CD4-positive, alpha-beta T cell (primary cell): ENCODE measurements at regions of chr1 and their contacts with region 1.

Region 1: GRCh38 chr1:111227851-111228747 is 586 bp downstream of the CHI3L2 start:
- DNase-seq: no peak
- ATAC-seq: no peak
- H3K4me3 ChIP-seq: no peak overlapping the region
- H3K4me3 Mint-ChIP-seq: peak overlapping the region; percentile 73
- H3K27ac ChIP-seq: peak overlapping the region; percentile 62 to 73
- H3K27ac Mint-ChIP-seq: peak overlapping the region; percentile 92
- H3K4me1 ChIP-seq: peaks cover 70% of the 10 kb centered on the region
- H3K4me1 Mint-ChIP-seq: peaks cover 90% of the 10 kb centered on the region
- H3K27me3 ChIP-seq: no peaks in the 10 kb centered on the region
- H3K27me3 Mint-ChIP-seq: no peaks in the 10 kb centered on the region
- CTCF ChIP-seq: no peak

Region 2: DNA sequence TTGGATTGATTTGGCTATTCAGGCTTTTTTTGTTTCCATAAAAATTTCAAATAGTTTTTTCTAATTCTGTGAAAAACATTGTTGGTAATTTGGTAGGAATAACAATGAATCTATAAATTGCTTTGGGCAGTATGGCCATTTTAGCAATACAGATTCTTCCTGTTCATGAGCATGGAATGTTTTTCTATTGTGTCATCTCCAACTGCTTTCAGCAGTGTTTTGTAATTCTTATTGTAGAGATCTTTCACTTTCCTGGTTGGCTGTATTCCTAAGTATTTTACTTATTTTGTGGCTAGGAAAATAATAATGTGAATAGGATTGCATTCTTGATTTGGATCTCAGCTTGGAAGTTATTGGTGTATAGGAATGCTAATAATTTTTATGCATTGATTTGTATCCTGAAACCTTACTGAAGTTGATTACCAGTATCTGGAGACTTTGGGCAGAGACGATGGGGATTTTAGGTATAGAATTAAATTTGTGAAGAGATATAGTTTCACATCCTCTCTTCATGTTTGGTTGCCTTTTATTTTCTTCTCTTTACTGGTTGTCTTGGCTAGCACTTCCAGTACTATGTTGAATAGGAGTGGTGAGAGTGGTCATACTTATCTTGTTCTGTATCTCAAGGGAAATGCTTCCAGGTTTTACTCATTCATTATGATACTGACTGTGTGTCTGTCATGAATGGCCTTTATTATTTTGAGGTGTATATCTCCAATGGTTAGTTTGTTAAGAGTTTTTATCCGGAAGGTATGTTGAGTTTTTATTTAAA is 145.5 kb before region 1 on chr1:
- CTCF ChIA-PET with region 1: no interaction called
- POLR2A ChIA-PET with region 1: no interaction called
- intact Hi-C with region 1: no loop called
- DNase-seq: no peak
- ATAC-seq: no peak
- H3K4me3 ChIP-seq: no peak overlapping the region
- H3K4me3 Mint-ChIP-seq: no peak overlapping the region
- H3K27ac ChIP-seq: no peak overlapping the region
- H3K27ac Mint-ChIP-seq: no peak overlapping the region
- H3K4me1 ChIP-seq: no peaks in the 10 kb centered on the region
- H3K4me1 Mint-ChIP-seq: no peaks in the 10 kb centered on the region
- H3K27me3 ChIP-seq: peaks cover 0 to 8% of the 10 kb centered on the region in 2 experiments
- H3K27me3 Mint-ChIP-seq: peaks cover 34% of the 10 kb centered on the region
- CTCF ChIP-seq: no peak

Region 3: GRCh38 chr1:111214074-111214801 is 13.9 kb before region 1 on chr1:
- CTCF ChIA-PET with region 1: interaction called, 4 read pairs
- POLR2A ChIA-PET with region 1: interaction called, 99 read pairs
- intact Hi-C with region 1: loop called in 1 of 2 experiments (anchors 1 kb)
- DNase-seq: peak in 1 of 14 experiments; percentile 12
- ATAC-seq: no peak
- H3K4me3 ChIP-seq: no peak overlapping the region
- H3K4me3 Mint-ChIP-seq: peak overlapping the region; percentile 80
- H3K27ac ChIP-seq: peak overlapping the region; percentile 76 to 88
- H3K27ac Mint-ChIP-seq: peak overlapping the region; percentile 98
- H3K4me1 ChIP-seq: peaks cover 69% of the 10 kb centered on the region
- H3K4me1 Mint-ChIP-seq: peaks cover 94% of the 10 kb centered on the region
- H3K27me3 ChIP-seq: no peaks in the 10 kb centered on the region
- H3K27me3 Mint-ChIP-seq: peaks cover 5% of the 10 kb centered on the region
- CTCF ChIP-seq: no peak

Region 4: GRCh38 chr1:111251570-111251969 is 23.5 kb after region 1 on chr1:
- CTCF ChIA-PET with region 1: no interaction called
- POLR2A ChIA-PET with region 1: interaction called, 14 read pairs
- intact Hi-C with region 1: no loop called
- DNase-seq: peak in 7 of 14 experiments; percentile 12 to 45 (median 33)
- ATAC-seq: peak; percentile 93
- H3K4me3 ChIP-seq: no peak overlapping the region
- H3K4me3 Mint-ChIP-seq: no peak overlapping the region
- H3K27ac ChIP-seq: no peak overlapping the region
- H3K27ac Mint-ChIP-seq: peak overlapping the region; percentile 76
- H3K4me1 ChIP-seq: peaks cover 10% of the 10 kb centered on the region
- H3K4me1 Mint-ChIP-seq: peaks cover 42% of the 10 kb centered on the region
- H3K27me3 ChIP-seq: no peaks in the 10 kb centered on the region
- H3K27me3 Mint-ChIP-seq: no peaks in the 10 kb centered on the region
- CTCF ChIP-seq: no peak

Region 5: DNA sequence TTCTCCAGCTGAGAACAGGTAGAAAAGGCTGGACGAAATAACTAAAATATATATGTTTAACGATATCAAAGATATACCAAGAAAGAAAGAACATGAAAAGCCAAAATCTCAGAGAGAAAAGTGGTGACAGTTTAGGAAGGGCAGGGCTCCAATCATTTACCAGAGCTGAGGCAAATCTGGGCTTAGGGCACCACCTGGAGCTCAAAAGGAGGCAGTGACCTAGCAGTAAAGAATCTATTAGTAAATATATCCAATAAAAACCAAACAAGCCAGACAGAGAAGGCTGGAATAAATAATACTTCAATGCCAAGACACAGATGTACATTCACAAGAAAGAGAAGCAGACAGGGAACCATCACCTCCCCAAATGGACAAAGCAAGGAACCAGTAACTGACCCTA is 106.1 kb after region 1 on chr1:
- CTCF ChIA-PET with region 1: interaction called, 20 read pairs
- POLR2A ChIA-PET with region 1: interaction called, 10 read pairs
- intact Hi-C with region 1: loop called (anchors 1 kb)
- DNase-seq: peak; percentile 37 to 85 (median 52)
- ATAC-seq: peak; percentile 95
- H3K4me3 ChIP-seq: no peak overlapping the region
- H3K4me3 Mint-ChIP-seq: no peak overlapping the region
- H3K27ac ChIP-seq: no peak overlapping the region
- H3K27ac Mint-ChIP-seq: no peak overlapping the region
- H3K4me1 ChIP-seq: peaks cover 8% of the 10 kb centered on the region
- H3K4me1 Mint-ChIP-seq: peaks cover 6% of the 10 kb centered on the region
- H3K27me3 ChIP-seq: no peaks in the 10 kb centered on the region
- H3K27me3 Mint-ChIP-seq: no peaks in the 10 kb centered on the region
- CTCF ChIP-seq: peak; percentile 81

Region 6: DNA sequence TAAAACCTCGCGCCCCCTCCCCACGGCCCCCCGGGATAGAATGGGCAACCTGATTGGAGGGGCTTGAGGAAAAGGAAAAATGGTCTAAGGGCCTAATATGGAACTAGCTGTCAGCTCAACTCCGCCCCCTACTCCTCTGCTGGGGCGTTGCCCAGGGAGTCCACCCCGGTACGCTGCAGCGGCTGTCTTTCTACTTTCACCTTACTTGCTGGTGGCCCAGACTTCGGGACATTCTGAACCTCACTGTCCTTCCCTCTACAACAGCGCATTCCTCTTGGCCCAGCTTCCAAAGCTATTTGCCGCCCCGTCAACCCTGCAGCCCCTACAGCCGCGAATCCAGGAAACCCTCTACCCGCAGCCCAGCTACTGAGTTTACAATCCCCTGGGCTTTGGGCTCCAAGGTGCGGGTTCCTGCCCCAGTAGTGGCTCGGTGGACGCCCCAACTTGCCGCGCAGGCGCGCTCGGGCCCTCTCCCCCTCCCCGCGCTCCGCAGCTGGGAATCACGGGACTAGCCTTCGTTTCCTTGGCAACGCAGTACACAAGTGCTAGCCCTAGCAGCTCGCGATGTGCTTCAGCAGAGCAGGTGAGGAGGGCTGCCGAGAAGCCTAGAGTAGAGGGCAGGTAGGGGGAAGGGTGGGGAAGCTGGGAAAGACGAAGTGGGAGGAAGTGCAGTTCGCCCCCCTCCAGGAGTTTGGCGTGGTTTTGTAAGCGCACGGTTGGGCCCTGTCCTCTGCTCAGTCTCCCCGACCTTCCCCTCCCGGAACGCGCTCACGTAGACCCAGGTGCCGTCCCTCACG is 118.2 kb after region 1 on chr1:
- CTCF ChIA-PET with region 1: interaction called, 3 read pairs
- POLR2A ChIA-PET with region 1: interaction called, 4 read pairs
- intact Hi-C with region 1: loop called in 1 of 2 experiments (anchors 5 kb)
- DNase-seq: peak; percentile 76 to 97 (median 86)
- ATAC-seq: peak; percentile 88
- H3K4me3 ChIP-seq: peak overlapping the region; percentile 71
- H3K4me3 Mint-ChIP-seq: peak overlapping the region; percentile 88
- H3K27ac ChIP-seq: peak overlapping the region; percentile 43 to 73
- H3K27ac Mint-ChIP-seq: peak overlapping the region; percentile 85
- H3K4me1 ChIP-seq: peaks cover 14% of the 10 kb centered on the region
- H3K4me1 Mint-ChIP-seq: peaks cover 29% of the 10 kb centered on the region
- H3K27me3 ChIP-seq: no peaks in the 10 kb centered on the region
- H3K27me3 Mint-ChIP-seq: no peaks in the 10 kb centered on the region
- CTCF ChIP-seq: peak; percentile 30